Gastrocnemius medialis (tissue), 4 donors: ENCODE measurements at regions of chr16 and their contacts with region 1.

Region 1: GRCh38 chr16:56356276-56357240 is 68.8 kb downstream of the AMFR start:
- DNase-seq: peak; percentile 56 to 82
- ATAC-seq: peak; percentile 69 to 74
- H3K4me3 ChIP-seq: peak overlapping the region; percentile 46 to 58 (median 49)
- H3K27ac ChIP-seq: peak overlapping the region; percentile 24 to 58 (median 56)
- H3K4me1 ChIP-seq: peaks cover 21 to 36% of the 10 kb centered on the region in 2 donors
- H3K27me3 ChIP-seq: no peaks in the 10 kb centered on the region
- CTCF ChIP-seq: peak; percentile 60 to 94 (median 77)
- POLR2A ChIP-seq: no peak

Region 2: DNA sequence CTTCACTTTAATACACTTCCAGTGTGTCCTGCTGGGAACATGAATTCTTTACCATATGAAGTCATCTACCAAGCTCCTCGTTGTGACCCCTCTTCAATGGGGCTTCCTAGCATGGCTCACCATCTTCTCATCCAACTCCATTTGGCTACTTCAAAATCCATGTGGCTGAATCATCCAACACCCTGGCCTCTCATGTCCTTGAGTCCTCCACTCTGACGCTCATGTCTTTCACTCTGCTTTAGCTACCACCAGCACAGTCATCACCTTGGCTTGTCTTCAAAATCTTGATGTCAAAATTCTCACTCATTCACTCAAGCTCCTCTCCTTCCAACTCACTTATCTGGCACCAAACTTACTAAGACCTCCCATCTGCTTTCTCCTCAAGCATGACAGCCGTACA is 33.0 kb after region 1 on chr16:
- in situ Hi-C with region 1: no loop called
- intact Hi-C with region 1: loop called (anchors 5 kb)
- DNase-seq: no peak
- ATAC-seq: peak in 1 of 2 donors; percentile 78
- H3K4me3 ChIP-seq: no peak overlapping the region
- H3K27ac ChIP-seq: peak overlapping the region in 1 of 4 donors; percentile 16
- H3K4me1 ChIP-seq: peaks cover 0 to 8% of the 10 kb centered on the region in 2 donors
- H3K27me3 ChIP-seq: no peaks in the 10 kb centered on the region
- CTCF ChIP-seq: no peak
- POLR2A ChIP-seq: no peak

Region 3: DNA sequence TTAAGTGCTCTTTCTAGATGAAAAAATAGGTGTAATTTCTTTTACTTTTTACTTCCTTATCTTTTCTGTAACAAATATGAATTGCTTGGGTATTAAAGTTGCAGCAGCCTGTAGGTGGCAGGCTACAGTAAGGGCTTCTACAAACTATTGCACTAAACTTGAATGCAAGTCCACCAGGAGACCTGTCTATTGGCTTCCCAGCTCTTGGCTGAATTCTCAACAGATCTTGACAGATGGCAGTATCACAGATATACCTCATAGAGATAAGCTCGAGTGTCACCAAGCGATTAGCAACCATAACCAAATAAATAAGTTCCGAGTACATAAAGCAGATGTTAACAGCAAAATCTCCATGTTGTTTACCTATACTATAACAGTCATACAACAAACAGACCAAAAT is 157.4 kb after region 1 on chr16:
- in situ Hi-C with region 1: no loop called
- intact Hi-C with region 1: no loop called
- DNase-seq: peak in 1 of 2 donors; percentile 41
- ATAC-seq: peak; percentile 74 to 75
- H3K4me3 ChIP-seq: no peak overlapping the region
- H3K27ac ChIP-seq: peak overlapping the region in 2 of 4 donors; percentile 14 to 16
- H3K4me1 ChIP-seq: peaks cover 44 to 63% of the 10 kb centered on the region in 2 donors
- H3K27me3 ChIP-seq: no peaks in the 10 kb centered on the region
- CTCF ChIP-seq: peak; percentile 37 to 69 (median 51)
- POLR2A ChIP-seq: no peak